GM10248 (cell line): ENCODE measurements at regions of chr17 and their contacts with region 1.

Region 1: GRCh38 chr17:49031965-49032928 is 35.1 kb downstream of the IGF2BP1 start:
- DNase-seq: peak; percentile 84
- CTCF ChIP-seq: peak; percentile 71

Region 2: GRCh38 chr17:48724251-48725003 is 307.8 kb before region 1 on chr17:
- CTCF ChIA-PET with region 1: interaction called, 21 read pairs
- POLR2A ChIA-PET with region 1: no interaction called
- DNase-seq: peak; percentile 71
- CTCF ChIP-seq: peak; percentile 82

Region 3: GRCh38 chr17:48816774-48817590 is 215.3 kb before region 1 on chr17 and contains the start of gene TTLL6:
- CTCF ChIA-PET with region 1: interaction called, 17 read pairs
- POLR2A ChIA-PET with region 1: no interaction called
- DNase-seq: peak; percentile 74
- CTCF ChIP-seq: no peak

Region 4: GRCh38 chr17:48892940-48893645 is 139.2 kb before region 1 on chr17:
- CTCF ChIA-PET with region 1: interaction called, 46 read pairs
- POLR2A ChIA-PET with region 1: interaction called, 5 read pairs
- DNase-seq: no peak
- CTCF ChIP-seq: no peak

Region 5: DNA sequence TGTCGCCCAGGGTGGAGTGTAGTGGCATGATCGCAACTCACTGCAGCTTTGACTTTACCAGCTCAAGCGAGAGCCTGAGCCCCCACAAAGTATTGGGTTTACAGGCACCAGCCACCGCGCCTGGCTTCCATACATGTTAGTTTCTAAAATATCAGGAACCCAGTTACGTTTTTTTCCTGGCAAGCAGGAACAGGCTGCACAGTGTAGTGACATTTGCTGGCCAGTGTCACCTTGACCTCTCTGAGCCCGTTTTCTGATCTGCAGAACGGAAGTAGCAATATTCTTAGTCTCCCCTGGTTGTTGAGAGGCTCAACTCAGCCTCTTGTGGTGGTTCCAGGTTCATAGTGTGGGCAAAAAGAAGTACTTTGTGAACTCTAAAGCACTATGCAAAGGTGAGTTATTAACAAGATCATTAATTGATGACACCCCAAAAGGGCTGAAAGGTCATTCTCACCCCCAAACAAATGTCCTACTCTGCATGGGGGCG is 19.4 kb before region 1 on chr17:
- CTCF ChIA-PET with region 1: interaction called, 11 read pairs
- POLR2A ChIA-PET with region 1: no interaction called
- DNase-seq: no peak
- CTCF ChIP-seq: no peak

Region 6: DNA sequence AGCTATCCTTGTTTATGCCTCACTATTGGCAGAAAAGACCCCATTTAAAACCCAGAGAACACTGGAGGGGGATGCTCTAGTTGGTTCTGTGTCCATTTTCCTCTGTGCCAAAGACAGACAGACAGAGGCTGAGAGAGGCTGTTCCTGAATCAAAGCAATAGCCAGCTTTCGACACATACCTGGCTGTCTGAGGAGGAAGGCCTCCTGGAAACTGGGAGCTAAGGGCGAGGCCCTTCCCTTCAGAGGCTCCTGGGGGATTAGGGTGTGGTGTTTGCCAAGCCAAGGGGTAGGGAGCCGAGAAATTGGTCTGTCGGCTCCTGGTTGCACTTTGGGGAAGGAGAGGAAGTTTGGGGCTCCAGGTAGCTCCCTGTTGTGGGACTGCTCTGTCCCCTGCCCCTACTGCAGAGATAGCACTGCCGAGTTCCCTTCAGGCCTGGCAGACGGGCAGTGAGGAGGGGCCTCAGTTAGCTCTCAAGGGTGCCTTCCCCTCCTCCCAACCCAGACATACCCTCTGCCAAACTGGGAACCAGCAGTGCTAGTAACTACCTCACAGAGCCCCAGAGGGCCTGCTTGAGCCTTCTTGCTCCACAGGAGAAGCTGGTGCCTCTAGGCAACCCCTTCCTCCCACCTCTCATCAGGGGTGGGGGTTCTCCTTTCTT is 21.1 kb after region 1 on chr17:
- CTCF ChIA-PET with region 1: interaction called, 56 read pairs
- POLR2A ChIA-PET with region 1: no interaction called
- DNase-seq: no peak
- CTCF ChIP-seq: no peak